ENCODE measurements at regions of chr20 and their contacts with region 1.

Region 1: GRCh38 chr20:653110-653589 is at the start of gene SRXN1:
- DNase-seq: peak; percentile 86 to 92
- ATAC-seq: peak; percentile 88 to 90
- H3K4me3 ChIP-seq: peak within 1 kb of the TSS; percentile 76 to 99 (median 82)
- H3K27ac ChIP-seq: peak within 1 kb of the TSS; percentile 83 to 99 (median 88)
- H3K4me1 ChIP-seq: peaks cover 19 to 21% of the 10 kb centered on the region in 2 donors
- H3K27me3 ChIP-seq: no peaks in the 10 kb centered on the region
- CTCF ChIP-seq: peak; percentile 35 to 80 (median 78)
- POLR2A ChIP-seq: peak; percentile 84 to 93
- total RNA-seq, gene SRXN1: 87.9 to 170 (median 128) TPM

Region 2: DNA sequence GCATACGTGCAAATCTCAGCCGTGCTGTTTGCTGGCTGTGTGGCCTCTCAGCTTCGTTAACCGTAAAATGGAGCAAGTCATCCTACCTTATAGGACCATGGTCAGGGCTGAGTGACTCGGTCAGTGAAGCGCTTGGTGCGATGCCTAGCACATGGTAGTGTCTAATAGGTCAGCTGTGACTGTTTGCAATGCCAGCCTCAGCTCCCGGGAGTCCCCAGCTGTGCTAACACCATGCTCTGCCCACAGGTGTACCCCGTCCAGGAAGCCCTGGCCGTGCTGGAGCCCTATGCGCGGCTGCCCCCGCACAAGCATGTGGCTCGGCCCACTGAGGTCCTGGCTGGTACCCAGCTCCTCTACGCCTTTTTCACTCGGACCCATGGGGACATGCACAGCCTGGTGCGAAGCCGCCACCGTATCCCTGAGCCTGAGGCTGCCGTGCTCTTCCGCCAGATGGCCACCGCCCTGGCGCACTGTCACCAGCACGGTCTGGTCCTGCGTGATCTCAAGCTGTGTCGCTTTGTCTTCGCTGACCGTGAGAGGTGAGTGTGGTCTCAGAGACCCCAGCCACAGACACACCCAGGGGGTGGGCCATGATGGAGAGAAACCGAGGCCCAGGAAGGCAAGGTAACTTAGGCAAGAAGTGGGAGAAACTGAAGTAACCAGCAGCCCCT is 262.0 kb before region 1 on chr20:
- in situ Hi-C with region 1: no loop called
- intact Hi-C with region 1: no loop called
- DNase-seq: no peak
- ATAC-seq: no peak
- H3K4me3 ChIP-seq: no peak overlapping the region
- H3K27ac ChIP-seq: no peak overlapping the region
- H3K4me1 ChIP-seq: no peaks in the 10 kb centered on the region
- H3K27me3 ChIP-seq: no peaks in the 10 kb centered on the region
- CTCF ChIP-seq: no peak
- POLR2A ChIP-seq: no peak

Region 3: GRCh38 chr20:419556-420168 is 233.5 kb before region 1 on chr20:
- in situ Hi-C with region 1: no loop called
- intact Hi-C with region 1: no loop called
- DNase-seq: no peak
- ATAC-seq: no peak
- H3K4me3 ChIP-seq: no peak overlapping the region
- H3K27ac ChIP-seq: no peak overlapping the region
- H3K4me1 ChIP-seq: peaks cover 3 to 19% of the 10 kb centered on the region in 2 donors
- H3K27me3 ChIP-seq: no peaks in the 10 kb centered on the region
- CTCF ChIP-seq: no peak
- POLR2A ChIP-seq: no peak

Region 4: DNA sequence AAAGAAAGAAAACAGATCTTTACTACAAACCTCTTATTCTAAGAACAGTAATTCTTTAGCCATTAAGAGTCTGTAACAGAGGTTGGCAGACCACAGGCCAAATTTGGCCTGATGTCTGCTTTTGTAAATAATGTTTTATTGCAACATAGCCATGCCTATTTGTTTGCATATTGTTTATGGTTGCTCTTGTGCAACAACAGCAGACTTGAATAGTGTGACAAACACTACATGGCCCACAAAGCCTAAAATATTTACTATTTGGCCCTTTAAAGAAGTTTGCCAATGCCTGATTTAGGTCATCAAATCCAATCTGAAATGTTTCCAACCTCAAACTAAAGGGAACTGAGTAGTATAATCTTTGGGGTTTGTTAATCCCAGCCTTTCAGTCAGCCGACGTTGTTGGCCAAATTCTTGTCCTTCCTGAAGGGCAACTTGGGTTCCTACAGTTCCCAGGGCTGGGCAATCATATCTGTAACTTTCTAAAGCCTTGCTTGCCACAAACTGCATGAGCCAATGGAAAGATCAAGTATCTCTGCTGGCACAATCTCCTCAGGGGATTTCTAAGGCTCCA is 156.9 kb before region 1 on chr20:
- in situ Hi-C with region 1: no loop called
- intact Hi-C with region 1: loop called (anchors 5 kb)
- DNase-seq: peak; percentile 71 to 82
- ATAC-seq: peak; percentile 99 to 100
- H3K4me3 ChIP-seq: no peak overlapping the region
- H3K27ac ChIP-seq: peak overlapping the region; percentile 78 to 81 (median 80)
- H3K4me1 ChIP-seq: peaks cover 14 to 23% of the 10 kb centered on the region in 2 donors
- H3K27me3 ChIP-seq: no peaks in the 10 kb centered on the region
- CTCF ChIP-seq: no peak
- POLR2A ChIP-seq: no peak

Region 5: GRCh38 chr20:555933-556526 is 97.1 kb before region 1 on chr20:
- in situ Hi-C with region 1: loop called in 2 of 4 experiments (anchors 10 kb)
- intact Hi-C with region 1: no loop called
- DNase-seq: no peak
- ATAC-seq: no peak
- H3K4me3 ChIP-seq: no peak overlapping the region
- H3K27ac ChIP-seq: no peak overlapping the region
- H3K4me1 ChIP-seq: no peaks in the 10 kb centered on the region
- H3K27me3 ChIP-seq: peaks cover 0 to 3% (median 2%) of the 10 kb centered on the region in 3 donors
- CTCF ChIP-seq: no peak
- POLR2A ChIP-seq: no peak

Region 6: GRCh38 chr20:733861-734260 is 80.7 kb after region 1 on chr20:
- in situ Hi-C with region 1: no loop called
- intact Hi-C with region 1: loop called (anchors 5 kb)
- DNase-seq: no peak
- ATAC-seq: no peak
- H3K4me3 ChIP-seq: no peak overlapping the region
- H3K27ac ChIP-seq: no peak overlapping the region
- H3K4me1 ChIP-seq: no peaks in the 10 kb centered on the region
- H3K27me3 ChIP-seq: peaks cover 8 to 13% (median 12%) of the 10 kb centered on the region in 3 donors
- CTCF ChIP-seq: no peak
- POLR2A ChIP-seq: no peak

Region 7: DNA sequence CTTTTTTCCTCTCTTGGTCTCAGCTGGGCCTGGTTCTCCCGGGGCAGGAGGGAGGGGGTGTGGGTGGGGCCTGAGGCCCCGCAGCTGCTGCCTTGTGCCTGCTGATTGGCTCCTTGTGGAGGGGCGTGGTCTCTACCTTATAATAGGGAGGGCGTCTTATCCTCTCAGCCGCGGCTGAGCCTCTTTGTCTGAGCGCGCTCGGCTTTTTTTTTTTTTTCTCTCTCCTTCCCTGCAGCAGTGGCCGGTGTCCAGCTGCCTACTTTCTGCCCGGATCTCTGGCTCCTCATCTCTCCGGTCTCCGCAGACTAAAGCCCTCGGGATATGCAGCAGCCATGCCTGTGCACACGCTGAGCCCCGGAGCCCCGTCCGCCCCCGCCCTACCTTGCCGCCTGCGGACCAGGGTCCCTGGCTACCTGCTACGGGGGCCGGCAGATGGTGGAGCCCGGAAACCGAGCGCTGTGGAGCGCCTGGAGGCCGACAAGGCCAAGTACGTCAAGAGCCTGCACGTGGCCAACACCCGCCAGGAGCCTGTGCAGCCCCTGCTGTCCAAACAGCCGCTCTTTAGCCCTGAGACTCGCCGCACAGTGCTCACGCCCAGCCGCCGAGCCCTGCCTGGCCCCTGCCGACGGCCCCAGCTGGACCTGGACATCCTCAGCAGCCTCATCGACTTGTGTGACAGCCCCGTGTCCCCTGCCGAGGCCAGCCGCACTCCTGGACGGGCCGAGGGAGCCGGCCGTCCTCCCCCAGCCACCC is 191.5 kb after region 1 on chr20:
- in situ Hi-C with region 1: no loop called
- intact Hi-C with region 1: no loop called
- DNase-seq: peak; percentile 85 to 89
- ATAC-seq: peak; percentile 99 to 100
- H3K4me3 ChIP-seq: peak overlapping the region; percentile 52 to 63 (median 54)
- H3K27ac ChIP-seq: peak overlapping the region in 1 of 4 donors; percentile 59
- H3K4me1 ChIP-seq: peaks cover 8 to 12% of the 10 kb centered on the region in 2 donors
- H3K27me3 ChIP-seq: peaks cover 0 to 2% (median 0%) of the 10 kb centered on the region in 3 donors
- CTCF ChIP-seq: no peak
- POLR2A ChIP-seq: no peak

Measured in gastrocnemius medialis (tissue), 4 donors.